ENCODE measurements at regions of chr15 and their contacts with region 1.

Region 1: GRCh38 chr15:40886586-40886985 is 7.7 kb upstream of the VPS18 start:
- DNase-seq: no peak
- H3K4me3 ChIP-seq: no peak overlapping the region
- H3K27ac ChIP-seq: no peak overlapping the region
- H3K4me1 ChIP-seq: peaks cover 0 to 6% (median under 1%) of the 10 kb centered on the region in 4 experiments
- H3K27me3 ChIP-seq: no peaks in the 10 kb centered on the region

Region 2: GRCh38 chr15:40873625-40874561 is 12.7 kb before region 1 on chr15 and contains the start of gene RHOV:
- CTCF ChIA-PET with region 1: interaction called, 38 read pairs
- POLR2A ChIA-PET with region 1: no interaction called
- DNase-seq: peak; percentile 57 to 72 (median 63)
- H3K4me3 ChIP-seq: peak within 1 kb of the TSS; percentile 37 to 77 (median 62)
- H3K27ac ChIP-seq: no peak within 1 kb of the TSS
- H3K4me1 ChIP-seq: peaks cover 0 to 18% (median 13%) of the 10 kb centered on the region in 4 experiments
- H3K27me3 ChIP-seq: peaks cover 0 to 3% (median 0%) of the 10 kb centered on the region in 5 experiments

Region 3: DNA sequence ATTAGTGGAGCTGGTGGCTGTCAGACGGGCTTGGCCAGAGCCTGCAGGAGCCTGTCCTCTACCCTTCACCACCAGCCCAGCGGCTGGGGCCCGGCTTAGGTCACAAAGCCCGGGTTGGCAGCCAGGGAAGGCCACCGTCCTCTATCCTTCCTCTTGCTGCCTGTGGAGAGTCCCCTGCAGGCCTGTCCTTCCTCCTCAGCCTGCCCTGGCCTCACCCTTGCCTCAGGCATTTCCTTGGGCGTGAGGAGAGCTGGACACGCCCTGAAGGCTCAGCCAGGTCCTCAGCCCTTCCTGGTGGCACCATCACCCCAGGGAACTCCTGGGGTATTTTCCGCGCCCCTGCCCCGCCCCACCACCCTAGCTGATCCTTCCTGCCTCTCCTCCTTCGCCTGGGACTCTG is 74.3 kb after region 1 on chr15:
- CTCF ChIA-PET with region 1: no interaction called
- POLR2A ChIA-PET with region 1: no interaction called
- DNase-seq: no peak
- H3K4me3 ChIP-seq: no peak overlapping the region
- H3K27ac ChIP-seq: no peak overlapping the region
- H3K4me1 ChIP-seq: peaks cover 0 to 11% (median 9%) of the 10 kb centered on the region in 4 experiments
- H3K27me3 ChIP-seq: no peaks in the 10 kb centered on the region